ENCODE measurements at regions of chr20 and their contacts with region 1.

Region 1: GRCh38 chr20:59560588-59561227 is 43.6 kb upstream of the PHACTR3 start:
- DNase-seq: no peak
- H3K4me3 ChIP-seq: no peak overlapping the region
- H3K4me3 Mint-ChIP-seq: no peak overlapping the region
- H3K27ac ChIP-seq: no peak overlapping the region
- H3K27ac Mint-ChIP-seq: no peak overlapping the region
- H3K4me1 ChIP-seq: no peaks in the 10 kb centered on the region
- H3K4me1 Mint-ChIP-seq: peaks cover 0 to 8% (median 3%) of the 10 kb centered on the region in 3 donors
- H3K27me3 ChIP-seq: no peaks in the 10 kb centered on the region
- H3K27me3 Mint-ChIP-seq: peaks cover 12 to 13% of the 10 kb centered on the region in 2 donors

Region 2: DNA sequence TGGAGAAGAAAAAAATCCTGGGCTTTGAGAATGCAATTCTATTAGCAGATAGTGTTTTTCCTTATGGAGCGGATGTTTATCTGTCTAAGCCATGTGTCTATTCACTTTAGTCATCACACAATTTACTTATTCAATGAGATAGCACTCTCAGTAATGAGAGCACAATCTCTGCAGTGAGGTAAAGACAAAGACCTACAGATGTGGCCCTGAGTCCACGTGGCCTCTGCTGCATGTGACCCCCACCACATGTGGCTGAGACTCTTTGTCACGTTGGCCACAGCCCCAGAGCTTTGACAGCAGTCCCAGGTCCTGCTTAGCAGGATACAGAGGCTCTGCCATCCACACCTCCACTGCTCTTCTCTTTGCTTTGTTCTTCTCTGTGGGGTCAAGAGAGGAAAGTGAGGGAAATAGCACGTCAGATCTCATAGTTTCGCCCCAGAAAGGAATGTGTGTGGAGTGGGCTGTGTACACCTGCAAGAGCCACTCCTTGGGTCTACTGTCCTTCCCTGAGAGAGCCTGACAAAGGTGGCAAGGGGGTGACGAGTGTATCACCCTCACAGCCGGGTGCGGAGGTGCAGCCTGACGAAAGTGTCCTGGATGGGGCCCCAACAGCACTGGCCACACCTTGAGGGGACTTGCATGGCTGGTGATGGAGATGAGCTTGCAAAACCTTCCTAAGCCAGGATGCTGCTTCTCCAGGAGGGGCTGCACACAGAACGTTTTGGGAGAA is 356.4 kb before region 1 on chr20:
- CTCF ChIA-PET with region 1: no interaction called
- POLR2A ChIA-PET with region 1: no interaction called
- DNase-seq: no peak
- H3K4me3 ChIP-seq: no peak overlapping the region
- H3K4me3 Mint-ChIP-seq: peak overlapping the region in 1 of 7 donors; percentile 40
- H3K27ac ChIP-seq: no peak overlapping the region
- H3K27ac Mint-ChIP-seq: peak overlapping the region in 7 of 8 donors; percentile 29 to 83 (median 65)
- H3K4me1 ChIP-seq: peaks cover 21% of the 10 kb centered on the region
- H3K4me1 Mint-ChIP-seq: peaks cover 43 to 52% (median 46%) of the 10 kb centered on the region in 3 donors
- H3K27me3 ChIP-seq: no peaks in the 10 kb centered on the region
- H3K27me3 Mint-ChIP-seq: no peaks in the 10 kb centered on the region

Region 3: GRCh38 chr20:59571551-59572314 is 11.0 kb after region 1 on chr20:
- CTCF ChIA-PET with region 1: interaction called, 12 read pairs
- POLR2A ChIA-PET with region 1: no interaction called
- DNase-seq: peak; percentile 18 to 53 (median 29)
- H3K4me3 ChIP-seq: peak overlapping the region; percentile 71
- H3K4me3 Mint-ChIP-seq: peak overlapping the region in 5 of 7 donors; percentile 27 to 68 (median 48)
- H3K27ac ChIP-seq: no peak overlapping the region
- H3K27ac Mint-ChIP-seq: peak overlapping the region in 1 of 8 donors; percentile 20
- H3K4me1 ChIP-seq: peaks cover 9% of the 10 kb centered on the region
- H3K4me1 Mint-ChIP-seq: peaks cover 0 to 4% (median 0%) of the 10 kb centered on the region in 3 donors
- H3K27me3 ChIP-seq: peaks cover 3% of the 10 kb centered on the region
- H3K27me3 Mint-ChIP-seq: peaks cover 18 to 52% of the 10 kb centered on the region in 2 donors